ENCODE measurements at regions of chr9 and their contacts with region 1.

Region 1: GRCh38 chr9:93682232-93682968 is 106.0 kb downstream of the PHF2 start:
- DNase-seq: peak; percentile 78
- H3K4me3 Mint-ChIP-seq: no peak overlapping the region
- H3K27ac Mint-ChIP-seq: peak overlapping the region; percentile 55
- H3K4me1 Mint-ChIP-seq: no peaks in the 10 kb centered on the region
- H3K27me3 Mint-ChIP-seq: peaks cover 18% of the 10 kb centered on the region

Region 2: DNA sequence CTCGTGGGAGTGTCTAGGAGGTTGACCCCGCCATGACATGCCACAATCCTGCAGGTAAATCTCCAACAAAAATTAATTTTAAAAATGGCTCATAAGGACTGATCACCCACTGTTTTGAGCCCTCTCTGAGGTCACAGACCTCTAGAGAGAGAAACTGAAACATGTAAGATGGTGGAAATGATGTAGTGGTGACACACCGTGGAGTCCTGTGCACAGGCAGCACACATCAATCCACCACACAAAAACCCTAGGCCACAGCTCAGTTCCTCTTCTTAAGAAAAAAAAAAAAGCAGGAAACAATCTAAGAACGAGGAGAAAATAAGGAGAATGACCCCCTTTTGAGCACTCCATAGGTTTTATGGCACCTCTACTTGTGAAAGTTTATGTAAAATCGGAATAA is 324.8 kb before region 1 on chr9:
- CTCF ChIA-PET with region 1: no interaction called
- DNase-seq: peak; percentile 41
- H3K4me3 Mint-ChIP-seq: no peak overlapping the region
- H3K27ac Mint-ChIP-seq: peak overlapping the region; percentile 42
- H3K4me1 Mint-ChIP-seq: peaks cover 12% of the 10 kb centered on the region
- H3K27me3 Mint-ChIP-seq: no peaks in the 10 kb centered on the region

Region 3: DNA sequence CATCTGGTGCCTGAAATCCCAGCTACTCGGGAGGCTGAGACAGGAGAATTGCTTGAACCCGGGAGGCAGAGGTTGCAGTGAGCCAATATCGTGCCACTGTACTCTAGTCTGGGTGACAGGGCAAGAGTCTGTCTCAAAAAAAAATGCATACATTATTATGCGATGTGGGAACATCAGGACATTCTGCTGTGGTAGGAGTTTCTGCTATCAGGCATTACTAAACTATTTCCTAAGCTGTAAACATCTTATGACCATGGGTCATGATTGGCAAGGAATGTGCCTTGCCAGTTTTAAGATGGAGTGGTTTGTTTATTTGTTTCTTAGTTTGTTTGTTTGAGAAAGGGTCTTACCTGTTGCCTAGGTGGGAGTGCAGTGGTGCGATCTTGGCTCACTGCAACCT is 276.0 kb before region 1 on chr9:
- CTCF ChIA-PET with region 1: no interaction called
- DNase-seq: no peak
- H3K4me3 Mint-ChIP-seq: no peak overlapping the region
- H3K27ac Mint-ChIP-seq: no peak overlapping the region
- H3K4me1 Mint-ChIP-seq: no peaks in the 10 kb centered on the region
- H3K27me3 Mint-ChIP-seq: peaks cover 16% of the 10 kb centered on the region

Region 4: DNA sequence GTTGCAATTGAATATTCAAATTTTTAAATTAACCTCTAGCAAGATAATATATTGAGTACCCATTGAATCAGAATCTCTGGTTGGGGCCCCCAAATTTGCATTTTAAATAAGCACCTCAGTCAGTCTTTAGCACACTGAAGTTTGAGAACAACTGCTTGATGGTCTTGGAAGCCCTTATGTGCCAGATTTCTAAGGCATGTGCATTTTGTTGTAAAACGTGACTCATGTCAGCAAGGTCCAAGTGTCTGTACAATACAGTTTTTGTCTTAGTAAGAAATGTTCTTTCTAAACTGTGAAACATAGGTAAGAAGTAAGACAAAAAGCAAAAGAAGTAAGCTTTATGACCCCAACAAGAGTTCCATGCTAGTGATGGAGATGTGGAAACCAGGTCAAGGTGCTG is 165.1 kb before region 1 on chr9:
- CTCF ChIA-PET with region 1: no interaction called
- DNase-seq: no peak
- H3K4me3 Mint-ChIP-seq: no peak overlapping the region
- H3K27ac Mint-ChIP-seq: no peak overlapping the region
- H3K4me1 Mint-ChIP-seq: no peaks in the 10 kb centered on the region
- H3K27me3 Mint-ChIP-seq: no peaks in the 10 kb centered on the region

Region 5: DNA sequence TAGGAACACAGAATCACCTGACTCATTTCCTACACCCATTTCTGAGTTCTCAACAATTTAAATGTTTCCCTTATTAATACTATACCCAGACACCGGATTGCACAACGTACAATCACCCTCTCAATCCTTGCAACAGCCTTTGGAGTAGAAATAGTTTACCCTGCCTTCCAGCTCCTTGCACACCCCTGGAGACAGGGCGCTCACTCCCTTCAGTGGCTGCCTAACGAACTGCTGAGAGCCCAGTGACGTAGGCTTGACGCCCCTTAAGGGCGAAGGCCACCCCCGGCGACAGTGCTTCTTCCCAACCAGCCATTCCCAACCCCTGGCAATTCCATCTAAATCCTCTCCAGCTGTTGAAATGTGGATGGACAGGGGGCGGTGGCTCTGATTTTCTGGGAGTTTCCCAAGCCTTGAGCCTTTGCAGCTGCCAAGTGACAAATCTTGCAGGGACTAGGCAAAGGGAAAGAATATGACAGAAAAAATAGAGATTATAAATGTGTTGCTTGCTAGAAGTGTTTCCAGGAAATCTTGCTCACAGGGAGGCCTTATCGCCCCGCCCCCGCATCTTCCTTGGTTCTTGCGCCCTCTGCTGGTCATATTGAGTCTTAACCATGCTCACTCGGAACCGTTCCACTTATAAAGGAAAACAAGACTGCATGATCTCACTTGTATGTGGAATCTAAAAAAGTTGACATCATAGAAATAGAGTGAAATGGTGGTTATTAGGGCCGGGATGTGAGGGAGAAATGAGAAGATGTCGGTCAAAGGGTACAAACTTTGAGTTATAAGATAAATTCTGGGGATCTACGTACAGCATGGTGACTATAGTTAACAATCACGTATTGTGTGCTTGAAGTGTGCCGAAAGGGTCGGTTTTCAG is 280.4 kb after region 1 on chr9:
- CTCF ChIA-PET with region 1: interaction called, 35 read pairs
- DNase-seq: peak; percentile 85
- H3K4me3 Mint-ChIP-seq: no peak overlapping the region
- H3K27ac Mint-ChIP-seq: no peak overlapping the region
- H3K4me1 Mint-ChIP-seq: peaks cover 31% of the 10 kb centered on the region
- H3K27me3 Mint-ChIP-seq: peaks cover 61% of the 10 kb centered on the region

Measured in activated naive CD4-positive, alpha-beta T cell treated with anti-CD3 and anti-CD28 coated beads, Interleukin-2, amount 10 ng/mL, durations not matched to agents 7 days and 5 days (primary cell).